IMR-90 (cell line): ENCODE measurements at regions of chr5 and their contacts with region 1.

Region 1: GRCh38 chr5:177599731-177600507 is at the start of gene B4GALT7:
- DNase-seq: peak; percentile 69
- ATAC-seq: peak; percentile 97
- H3K4me3 ChIP-seq: peak within 1 kb of the TSS; percentile 88
- H3K27ac ChIP-seq: peak within 1 kb of the TSS; percentile 78
- H3K4me1 ChIP-seq: peaks cover 3% of the 10 kb centered on the region
- H3K27me3 ChIP-seq: no peaks in the 10 kb centered on the region
- CTCF ChIP-seq: no peak
- POLR2A ChIP-seq: peak; percentile 86
- RAD21 ChIP-seq: no peak
- total RNA-seq, gene B4GALT7: 28.6 and 29.2 TPM in 2 replicates

Region 2: GRCh38 chr5:177546258-177546741 is 53.6 kb before region 1 on chr5:
- CTCF ChIA-PET with region 1: interaction called, 3 read pairs
- POLR2A ChIA-PET with region 1: interaction called, 3 read pairs
- dilution Hi-C with region 1: no loop called
- in situ Hi-C with region 1: no loop called
- intact Hi-C with region 1: loop called (anchors 2 kb)
- DNase-seq: peak; percentile 99
- ATAC-seq: peak; percentile 86
- H3K4me3 ChIP-seq: no peak overlapping the region
- H3K27ac ChIP-seq: peak overlapping the region; percentile 97
- H3K4me1 ChIP-seq: peaks cover 21% of the 10 kb centered on the region
- H3K27me3 ChIP-seq: no peaks in the 10 kb centered on the region
- CTCF ChIP-seq: peak; percentile 35
- POLR2A ChIP-seq: 0 out of 2 replicates have a peak, but pooled peaks have one; percentile 20
- RAD21 ChIP-seq: no peak; the same call in 1 of the 2 replicates

Region 3: GRCh38 chr5:178069909-178070308 is 470.0 kb after region 1 on chr5:
- CTCF ChIA-PET with region 1: no interaction called
- POLR2A ChIA-PET with region 1: no interaction called
- dilution Hi-C with region 1: no loop called
- in situ Hi-C with region 1: loop called (anchors 25 kb)
- intact Hi-C with region 1: no loop called
- DNase-seq: peak; percentile 26
- ATAC-seq: peak; percentile 76
- H3K4me3 ChIP-seq: no peak overlapping the region
- H3K27ac ChIP-seq: no peak overlapping the region
- H3K4me1 ChIP-seq: no peaks in the 10 kb centered on the region
- H3K27me3 ChIP-seq: peaks cover 37% of the 10 kb centered on the region
- CTCF ChIP-seq: peak; percentile 42
- POLR2A ChIP-seq: no peak
- RAD21 ChIP-seq: peak; percentile 46

Region 4: GRCh38 chr5:178153573-178154343 is 553.8 kb after region 1 on chr5 and contains the start of gene NHP2:
- CTCF ChIA-PET with region 1: no interaction called
- POLR2A ChIA-PET with region 1: no interaction called
- dilution Hi-C with region 1: no loop called
- in situ Hi-C with region 1: loop called (anchors 10 kb)
- intact Hi-C with region 1: no loop called
- DNase-seq: peak; percentile 99
- ATAC-seq: peak; percentile 100
- H3K4me3 ChIP-seq: peak within 1 kb of the TSS; percentile 66
- H3K27ac ChIP-seq: peak within 1 kb of the TSS; percentile 44
- H3K4me1 ChIP-seq: peaks cover 7% of the 10 kb centered on the region
- H3K27me3 ChIP-seq: no peaks in the 10 kb centered on the region
- CTCF ChIP-seq: no peak
- POLR2A ChIP-seq: peak; percentile 66; the same call in 1 of the 2 replicates
- RAD21 ChIP-seq: no peak
- total RNA-seq, gene NHP2: 278 and 302 TPM in 2 replicates

Region 5: GRCh38 chr5:178163772-178164735 is 564.1 kb after region 1 on chr5:
- CTCF ChIA-PET with region 1: no interaction called
- POLR2A ChIA-PET with region 1: no interaction called
- dilution Hi-C with region 1: no loop called
- in situ Hi-C with region 1: loop called (anchors 10 kb)
- intact Hi-C with region 1: loop called (anchors 10 kb)
- DNase-seq: peak; percentile 52
- ATAC-seq: peak; percentile 100
- H3K4me3 ChIP-seq: no peak overlapping the region
- H3K27ac ChIP-seq: no peak overlapping the region
- H3K4me1 ChIP-seq: no peaks in the 10 kb centered on the region
- H3K27me3 ChIP-seq: peaks cover 37% of the 10 kb centered on the region
- CTCF ChIP-seq: peak; percentile 95
- POLR2A ChIP-seq: no peak
- RAD21 ChIP-seq: peak; percentile 95